IMR-90 (cell line): ENCODE measurements at regions of chr1 and their contacts with region 1.

Region 1: GRCh38 chr1:42358791-42359190 is 21.8 kb upstream of the RIMKLA start:
- DNase-seq: no peak
- ATAC-seq: no peak
- H3K4me3 ChIP-seq: no peak overlapping the region
- H3K27ac ChIP-seq: no peak overlapping the region
- H3K4me1 ChIP-seq: no peaks in the 10 kb centered on the region
- H3K27me3 ChIP-seq: peaks cover 2% of the 10 kb centered on the region; the same call in 1 of the 2 replicates
- CTCF ChIP-seq: no peak
- POLR2A ChIP-seq: no peak
- RAD21 ChIP-seq: no peak

Region 2: DNA sequence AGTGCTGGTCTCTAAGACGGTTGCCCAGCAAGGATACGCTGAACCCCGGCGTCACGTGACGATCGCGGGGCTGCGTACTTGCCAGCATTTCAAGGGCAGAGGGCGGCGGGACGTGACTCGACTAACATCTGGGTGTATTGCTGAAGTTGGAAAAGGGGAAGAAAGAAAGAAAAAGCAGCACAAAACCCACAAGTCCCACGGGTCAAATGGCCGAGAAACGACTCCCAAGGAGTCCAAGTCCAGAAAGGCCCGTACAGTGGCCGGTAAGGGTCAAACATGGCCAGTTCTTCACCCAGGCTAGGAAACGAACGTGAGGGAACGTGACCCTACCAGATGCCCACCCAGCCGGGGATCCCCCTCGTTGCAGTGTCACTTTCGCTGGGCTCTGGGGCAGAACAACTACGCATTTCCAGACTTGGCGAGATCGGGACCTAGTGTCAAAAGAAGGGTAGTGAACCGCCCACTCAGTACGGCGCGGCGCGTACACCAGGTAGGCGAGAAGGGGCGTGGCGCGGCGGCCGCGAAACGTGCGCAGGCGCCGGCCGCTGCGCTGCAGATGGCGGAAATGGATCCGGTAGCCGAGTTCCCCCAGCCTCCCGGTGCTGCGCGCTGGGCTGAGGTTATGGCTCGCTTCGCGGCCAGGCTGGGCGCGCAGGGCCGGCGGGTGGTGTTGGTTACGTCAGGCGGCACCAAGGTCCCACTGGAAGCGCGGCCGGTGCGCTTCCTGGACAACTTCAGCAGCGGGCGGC is 97.4 kb after region 1 on chr1 and contains the starts of genes PPCS and ZMYND12:
- CTCF ChIA-PET with region 1: no interaction called
- POLR2A ChIA-PET with region 1: interaction called, 12 read pairs
- dilution Hi-C with region 1: no loop called
- in situ Hi-C with region 1: no loop called
- intact Hi-C with region 1: no loop called
- DNase-seq: peak; percentile 76
- ATAC-seq: peak; percentile 93
- H3K4me3 ChIP-seq: peak within 1 kb of the TSS; percentile 68
- H3K27ac ChIP-seq: peak within 1 kb of the TSS; percentile 68
- H3K4me1 ChIP-seq: peaks cover 5% of the 10 kb centered on the region
- H3K27me3 ChIP-seq: no peaks in the 10 kb centered on the region
- CTCF ChIP-seq: no peak
- POLR2A ChIP-seq: peak; percentile 67; the same call in 1 of the 2 replicates
- RAD21 ChIP-seq: no peak
- total RNA-seq, gene PPCS: 8.2 and 13.6 TPM in 2 replicates
- total RNA-seq, gene ZMYND12: under 0.01 TPM in 1 of 2 replicates, not detected in the other